WTC11 (cell line): ENCODE measurements at regions of chr11 and their contacts with region 1.

Region 1: DNA sequence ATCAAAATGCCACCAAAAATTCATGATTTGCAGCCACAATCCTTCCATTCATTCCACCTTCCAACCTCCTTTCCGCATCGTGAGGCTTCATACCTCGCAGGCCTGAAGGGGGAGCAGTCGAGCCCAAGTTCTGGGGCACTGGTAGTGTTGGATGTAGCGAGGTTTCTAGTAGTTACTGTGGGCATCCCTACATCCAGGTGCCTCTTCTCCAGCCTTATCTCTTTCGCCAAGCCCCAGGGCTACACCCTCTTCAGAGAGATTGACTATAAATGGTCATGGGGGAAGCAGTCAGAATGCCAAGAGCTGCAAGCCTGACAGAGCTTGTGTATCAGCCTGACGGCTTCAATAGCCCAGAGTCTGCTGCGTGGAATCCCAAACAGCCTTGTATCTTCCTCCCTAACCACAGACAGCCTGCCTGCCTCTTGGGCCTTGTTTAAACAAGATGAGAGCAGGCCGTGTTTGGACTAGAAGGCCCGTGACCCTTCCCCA is 28.9 kb downstream of the CLMP start:
- DNase-seq: peak; percentile 80
- ATAC-seq: peak; percentile 93
- H3K4me3 Mint-ChIP-seq: no peak overlapping the region
- H3K27ac Mint-ChIP-seq: no peak overlapping the region
- H3K4me1 Mint-ChIP-seq: peaks cover 46% of the 10 kb centered on the region
- H3K27me3 Mint-ChIP-seq: no peaks in the 10 kb centered on the region; the same call in 1 of the 2 replicates
- CTCF ChIP-seq: peak; percentile 59

Region 2: DNA sequence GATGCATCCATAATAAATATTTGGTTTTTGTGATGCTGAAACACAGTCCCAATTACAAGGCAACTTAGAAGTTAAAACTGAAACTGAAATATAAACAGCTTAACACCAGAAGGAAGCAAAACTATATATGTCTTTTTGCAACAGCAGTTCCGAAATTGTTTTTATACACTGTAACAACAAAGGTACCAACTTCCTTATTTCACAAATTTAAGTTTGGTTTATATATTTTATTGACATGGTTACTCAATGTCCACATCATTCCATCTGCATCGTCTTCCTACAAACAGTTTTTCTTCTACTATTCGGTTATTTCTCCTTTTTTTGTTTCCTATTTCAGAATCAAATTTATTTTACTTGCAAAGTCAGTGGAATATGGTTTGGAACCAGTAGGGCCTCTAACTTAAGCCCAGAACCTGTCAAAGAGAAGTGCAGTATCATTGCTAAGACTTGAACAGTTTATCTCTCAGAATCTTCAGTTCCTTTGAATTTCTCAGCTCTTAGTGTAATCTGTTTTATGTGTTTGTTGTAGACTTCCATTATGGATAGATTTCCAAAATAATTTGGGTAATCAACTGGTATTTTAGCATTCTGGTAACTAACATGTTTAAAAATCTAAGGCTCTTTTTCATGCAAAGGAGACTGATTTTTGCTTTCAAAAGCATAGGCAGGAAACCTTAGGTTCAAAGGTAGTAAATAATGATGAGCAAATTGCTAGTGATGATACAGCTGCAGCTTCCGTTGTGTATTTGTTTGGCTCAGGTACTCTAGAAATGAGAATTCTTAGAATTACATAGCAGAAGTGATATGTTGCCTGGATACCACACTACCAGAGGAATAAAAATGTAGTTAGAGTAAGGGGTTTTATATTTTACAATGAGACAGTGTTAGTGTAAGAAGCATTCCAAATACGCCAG is 96.0 kb before region 1 on chr11:
- CTCF ChIA-PET with region 1: no interaction called
- POLR2A ChIA-PET with region 1: no interaction called
- DNase-seq: no peak
- ATAC-seq: no peak
- H3K4me3 Mint-ChIP-seq: 0 out of 2 replicates have a peak overlapping the region, but pooled peaks have one; percentile 21
- H3K27ac Mint-ChIP-seq: peak overlapping the region; percentile 66
- H3K4me1 Mint-ChIP-seq: peaks cover 41% of the 10 kb centered on the region
- H3K27me3 Mint-ChIP-seq: no peaks in the 10 kb centered on the region
- CTCF ChIP-seq: no peak

Region 3: DNA sequence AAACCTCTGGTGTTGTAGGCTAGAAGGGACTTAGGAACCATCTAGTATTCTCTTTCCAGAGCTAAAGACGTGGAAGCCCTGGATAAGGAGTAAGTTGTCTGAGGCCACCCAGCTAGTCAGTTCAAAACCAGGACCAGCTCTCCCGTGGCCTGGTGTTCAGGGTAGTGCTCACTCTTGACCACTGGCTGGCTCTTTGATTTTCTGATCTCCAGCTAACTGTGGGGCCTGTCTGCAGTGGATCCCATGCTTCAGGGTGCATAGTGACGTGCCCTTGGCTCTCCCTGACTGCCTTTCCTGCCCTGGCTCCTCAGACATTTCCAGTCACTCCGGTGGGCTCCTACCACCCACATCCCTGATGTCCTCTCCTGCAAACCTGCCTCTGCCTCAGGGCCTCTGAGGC is 27.6 kb after region 1 on chr11:
- CTCF ChIA-PET with region 1: interaction called, 11 read pairs
- POLR2A ChIA-PET with region 1: no interaction called
- DNase-seq: no peak
- ATAC-seq: no peak
- H3K4me3 Mint-ChIP-seq: peak overlapping the region; percentile 91
- H3K27ac Mint-ChIP-seq: peak overlapping the region; percentile 82
- H3K4me1 Mint-ChIP-seq: peaks cover 59% of the 10 kb centered on the region
- H3K27me3 Mint-ChIP-seq: peaks cover 16% of the 10 kb centered on the region
- CTCF ChIP-seq: no peak

Region 4: DNA sequence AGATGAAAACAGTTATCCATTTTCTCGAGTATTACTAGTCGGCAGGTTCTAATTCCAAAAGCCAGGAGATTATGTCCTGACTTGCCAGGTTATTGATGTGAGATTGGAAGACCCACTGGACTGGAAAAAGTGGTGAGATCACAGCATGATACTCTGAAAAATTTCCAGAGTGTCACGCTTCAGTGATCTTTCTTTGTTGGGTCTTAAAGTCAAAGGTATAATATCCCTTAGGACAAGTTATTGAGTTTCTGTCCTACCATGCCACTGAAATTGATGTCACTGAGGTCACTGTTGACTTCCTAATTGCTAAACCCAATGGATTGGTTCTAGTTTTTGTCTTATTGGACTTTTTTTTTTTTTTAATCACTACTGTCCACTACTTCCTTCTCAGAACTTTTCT is 159.4 kb after region 1 on chr11:
- CTCF ChIA-PET with region 1: no interaction called
- POLR2A ChIA-PET with region 1: no interaction called
- DNase-seq: no peak
- ATAC-seq: no peak
- H3K4me3 Mint-ChIP-seq: no peak overlapping the region
- H3K27ac Mint-ChIP-seq: no peak overlapping the region
- H3K4me1 Mint-ChIP-seq: peaks cover 4% of the 10 kb centered on the region
- H3K27me3 Mint-ChIP-seq: no peaks in the 10 kb centered on the region
- CTCF ChIP-seq: no peak

Region 5: DNA sequence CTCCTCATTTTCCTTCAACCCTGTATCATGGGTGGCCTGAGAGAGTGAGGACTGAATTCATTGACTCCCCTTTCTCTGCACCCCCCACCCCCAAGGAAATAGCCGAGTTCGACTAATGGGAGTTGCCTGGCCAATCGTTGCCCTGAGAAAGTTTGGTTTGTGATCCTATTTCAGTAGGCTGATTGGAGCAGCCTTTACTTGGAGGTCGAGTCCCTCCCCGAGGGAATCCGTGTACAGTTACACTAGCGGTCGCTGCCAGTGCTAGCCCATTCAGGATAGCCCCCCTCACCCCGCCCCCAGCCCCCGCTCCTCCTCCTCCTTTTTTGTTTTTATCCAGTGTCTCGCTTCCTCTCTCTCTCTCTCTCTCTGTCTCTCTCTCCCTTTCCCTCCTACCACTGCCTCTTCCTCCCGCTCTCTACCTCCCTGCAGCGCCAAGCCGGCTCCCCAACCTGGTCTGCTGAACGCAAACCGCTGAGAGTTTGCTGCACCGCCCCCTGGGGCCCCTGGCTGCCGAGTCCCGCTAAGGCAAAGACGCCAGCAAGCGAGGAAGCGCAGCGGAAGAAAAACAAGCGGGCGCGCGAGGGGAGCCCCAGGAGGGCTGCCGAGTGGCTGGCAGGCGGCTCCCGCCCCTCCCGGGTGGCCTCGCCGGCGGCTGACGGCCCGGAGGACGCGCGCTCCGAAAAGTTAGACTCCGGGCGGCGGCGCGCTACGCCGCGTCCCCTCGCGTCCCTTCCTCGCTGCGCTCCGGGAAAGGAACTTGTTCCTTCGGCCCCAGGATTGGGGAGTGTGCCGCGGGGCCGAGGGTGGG is 264.0 kb after region 1 on chr11 and contains the start of gene GRAMD1B:
- CTCF ChIA-PET with region 1: no interaction called
- POLR2A ChIA-PET with region 1: no interaction called
- DNase-seq: peak; percentile 82
- ATAC-seq: peak; percentile 84
- H3K4me3 Mint-ChIP-seq: peak within 1 kb of the TSS; percentile 82
- H3K27ac Mint-ChIP-seq: peak within 1 kb of the TSS; percentile 86
- H3K4me1 Mint-ChIP-seq: peaks cover 65% of the 10 kb centered on the region
- H3K27me3 Mint-ChIP-seq: peaks cover 34% of the 10 kb centered on the region
- CTCF ChIP-seq: no peak
- total RNA-seq, gene GRAMD1B: 22.1 to 31.5 TPM (median 23.3 TPM) in 3 replicates